RWPE1 (cell line): ENCODE measurements at regions of chr2 and their contacts with region 1.

Region 1: DNA sequence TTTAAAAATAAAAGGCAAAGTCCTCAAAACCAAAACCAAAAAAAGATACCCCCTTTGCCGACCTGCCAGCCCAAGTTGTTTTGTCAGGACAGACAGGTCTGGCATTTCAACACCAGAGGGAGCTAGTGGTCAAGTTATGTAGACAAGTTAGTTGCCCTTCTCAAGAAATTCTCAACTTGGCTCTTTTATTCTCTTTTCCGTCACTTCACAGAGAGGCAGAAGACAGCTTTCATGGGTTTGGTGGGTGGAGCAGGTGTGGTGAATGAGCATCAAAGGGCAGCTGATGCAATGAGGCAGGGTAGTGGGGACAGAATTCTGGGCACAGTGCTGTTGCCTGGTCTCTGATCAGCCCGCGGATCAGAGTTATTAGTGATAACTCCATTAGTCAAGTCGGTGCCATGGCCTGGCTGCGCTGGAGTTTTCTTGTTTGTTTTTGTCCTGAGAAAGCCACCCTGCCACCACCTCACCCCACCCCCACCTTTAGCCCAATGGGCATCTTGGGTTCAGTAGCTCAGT is 303.7 kb upstream of the EPAS1 start:
- DNase-seq: peak; percentile 63
- H3K27ac ChIP-seq: peak overlapping the region; percentile 91
- CTCF ChIP-seq: peak; percentile 70

Region 2: DNA sequence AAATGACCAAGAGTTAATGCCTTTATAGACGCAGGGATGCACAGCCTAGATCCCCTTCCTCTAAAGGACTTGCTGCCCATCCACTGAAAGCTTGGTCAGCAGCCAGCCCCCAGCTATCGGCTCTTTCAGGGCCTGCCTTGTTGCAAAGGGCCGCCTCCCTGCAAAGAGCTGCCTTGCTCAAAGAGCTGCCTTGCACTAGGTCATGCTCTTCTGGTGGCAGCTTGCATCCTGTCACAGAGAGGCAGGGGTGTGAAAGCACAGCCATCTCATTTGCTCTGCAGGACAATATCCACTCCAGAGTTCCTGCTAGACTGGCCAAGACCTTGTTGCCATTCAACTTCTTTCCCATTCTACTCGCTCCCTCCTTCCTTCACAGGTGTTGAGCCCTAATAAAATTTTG is 785.0 kb after region 1 on chr2:
- CTCF ChIA-PET with region 1: interaction called, 10 read pairs
- POLR2A ChIA-PET with region 1: no interaction called
- DNase-seq: no peak
- H3K27ac ChIP-seq: peak overlapping the region; percentile 20; the same call in 1 of the 2 replicates
- CTCF ChIP-seq: no peak